SK-N-SH (cell line): ENCODE measurements at regions of chr1 and their contacts with region 1.

Region 1: DNA sequence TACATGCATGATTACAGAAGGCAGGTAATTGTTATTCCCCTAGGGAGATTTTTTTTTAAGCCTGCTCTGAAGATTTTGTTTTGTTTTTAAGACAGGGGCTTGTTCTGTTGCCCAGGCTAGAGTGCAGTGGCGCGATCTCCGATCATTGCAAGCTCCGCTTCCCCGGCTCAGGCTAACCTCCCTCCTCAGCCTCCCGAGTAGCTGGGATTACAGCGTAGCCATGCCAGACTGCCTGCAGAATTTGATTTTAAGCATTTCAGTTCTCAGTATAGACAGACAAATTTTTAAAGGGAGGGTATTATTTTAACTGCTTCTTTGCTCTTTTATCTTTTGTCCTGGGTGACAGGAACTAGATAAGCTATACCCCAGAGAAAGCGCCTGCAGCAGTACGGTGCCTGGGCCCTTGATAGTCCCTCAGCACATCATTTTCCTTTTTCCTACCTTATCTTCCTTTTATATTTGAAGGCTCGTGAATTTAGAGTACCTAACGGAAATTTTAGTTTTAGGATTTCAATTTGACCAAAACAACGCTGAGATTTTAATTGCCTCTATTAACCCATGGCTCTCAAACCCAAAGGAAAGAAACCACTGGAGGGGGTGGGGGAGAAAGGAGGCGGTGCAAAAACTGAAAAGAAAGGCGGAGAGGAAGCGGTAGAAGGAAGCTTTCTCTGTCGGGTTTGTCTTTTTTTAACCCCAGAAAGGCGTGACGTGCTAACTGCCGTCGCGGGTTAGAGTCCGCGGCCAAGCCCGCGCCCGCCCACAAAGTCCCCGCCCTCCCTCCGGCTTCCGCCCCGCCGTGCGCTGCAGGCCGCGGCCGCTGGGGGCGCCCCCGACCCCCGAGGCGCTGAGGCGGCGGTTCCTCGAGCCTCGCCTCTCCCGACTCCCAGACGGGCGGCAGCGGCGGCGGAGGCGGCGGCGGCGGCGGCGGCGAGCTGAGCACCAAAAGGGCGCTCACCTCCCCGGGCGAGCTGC is at the start of gene EEIG2:
- DNase-seq: peak; percentile 95
- H3K4me3 ChIP-seq: peak within 1 kb of the TSS; percentile 77 to 82
- H3K27ac ChIP-seq: peak within 1 kb of the TSS; percentile 55 to 76
- H3K4me1 ChIP-seq: peaks cover 5 to 12% of the 10 kb centered on the region in 2 experiments; a peak in 3 of 4 replicates
- H3K27me3 ChIP-seq: no peaks in the 10 kb centered on the region
- CTCF ChIP-seq: peak; percentile 64
- EP300 ChIP-seq: no peak
- RAD21 ChIP-seq: peak; percentile 46
- polyA plus RNA-seq, gene EEIG2: 2.9 and 3.1 TPM in 2 replicates

Region 2: DNA sequence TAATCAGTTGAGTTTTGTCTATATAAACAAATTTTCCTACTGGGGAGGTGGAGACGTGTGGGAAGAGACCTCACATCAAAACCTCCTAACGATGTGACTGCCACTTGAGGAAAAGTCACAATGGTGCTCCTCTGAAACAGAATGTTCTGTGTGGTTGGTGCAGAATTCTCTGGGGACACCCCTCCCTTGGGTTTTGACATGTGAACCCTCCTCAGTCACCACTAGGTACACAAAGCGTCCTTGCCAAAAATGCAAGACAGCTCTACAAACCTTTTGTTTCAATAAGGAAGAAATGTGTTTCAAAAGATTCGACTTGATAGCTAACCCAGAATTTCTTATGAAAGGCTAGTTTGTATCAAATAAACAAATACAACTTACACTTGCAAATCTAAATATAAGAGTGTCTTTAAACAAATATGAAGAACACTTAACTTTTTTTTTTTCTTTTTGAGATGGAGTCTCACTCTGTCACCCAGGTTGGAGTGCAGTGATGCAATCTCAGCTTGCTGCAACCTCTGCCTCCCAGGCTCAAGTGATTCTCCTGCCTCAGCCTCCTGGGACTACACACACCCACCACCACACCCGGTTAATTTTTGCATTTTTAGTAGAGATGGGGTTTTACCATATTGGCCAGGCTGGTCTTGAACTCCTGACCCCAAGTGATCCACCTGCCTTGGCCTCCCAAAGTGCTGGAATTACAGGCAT is 368.6 kb before region 1 on chr1:
- CTCF ChIA-PET with region 1: no interaction called
- POLR2A ChIA-PET with region 1: no interaction called
- DNase-seq: no peak
- H3K4me3 ChIP-seq: no peak overlapping the region
- H3K27ac ChIP-seq: no peak overlapping the region
- H3K4me1 ChIP-seq: no peaks in the 10 kb centered on the region
- H3K27me3 ChIP-seq: no peaks in the 10 kb centered on the region
- CTCF ChIP-seq: no peak
- EP300 ChIP-seq: no peak
- RAD21 ChIP-seq: no peak

Region 3: GRCh38 chr1:108482708-108483107 is 76.8 kb before region 1 on chr1:
- CTCF ChIA-PET with region 1: no interaction called
- POLR2A ChIA-PET with region 1: no interaction called
- DNase-seq: no peak
- H3K4me3 ChIP-seq: no peak overlapping the region
- H3K27ac ChIP-seq: no peak overlapping the region
- H3K4me1 ChIP-seq: no peaks in the 10 kb centered on the region
- H3K27me3 ChIP-seq: no peaks in the 10 kb centered on the region
- CTCF ChIP-seq: no peak
- EP300 ChIP-seq: no peak
- RAD21 ChIP-seq: no peak

Region 4: DNA sequence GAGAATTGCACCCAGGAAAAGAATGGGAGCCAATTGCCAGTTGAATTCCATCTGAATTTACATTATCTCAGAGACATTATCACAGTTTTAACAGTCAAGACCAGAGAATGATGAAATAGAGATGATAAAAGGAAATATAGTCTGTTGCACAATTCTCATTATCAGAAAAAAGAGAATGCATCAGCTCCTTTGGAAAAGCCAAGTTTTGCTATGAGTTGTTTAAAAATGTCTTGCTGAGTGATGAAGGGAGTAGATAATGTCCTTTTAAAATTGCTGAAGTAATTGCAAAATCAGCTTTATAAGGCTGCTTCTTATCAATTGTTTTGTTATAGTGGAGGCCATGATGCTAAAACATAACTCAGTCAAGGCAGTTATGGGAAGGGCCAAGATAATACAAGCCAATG is 37.5 kb before region 1 on chr1:
- CTCF ChIA-PET with region 1: interaction called, 12 read pairs
- POLR2A ChIA-PET with region 1: no interaction called
- DNase-seq: no peak
- H3K4me3 ChIP-seq: no peak overlapping the region
- H3K27ac ChIP-seq: no peak overlapping the region
- H3K4me1 ChIP-seq: no peaks in the 10 kb centered on the region
- H3K27me3 ChIP-seq: peaks cover 14% of the 10 kb centered on the region; the same call in 1 of the 2 replicates
- CTCF ChIP-seq: no peak
- EP300 ChIP-seq: no peak
- RAD21 ChIP-seq: no peak

Region 5: DNA sequence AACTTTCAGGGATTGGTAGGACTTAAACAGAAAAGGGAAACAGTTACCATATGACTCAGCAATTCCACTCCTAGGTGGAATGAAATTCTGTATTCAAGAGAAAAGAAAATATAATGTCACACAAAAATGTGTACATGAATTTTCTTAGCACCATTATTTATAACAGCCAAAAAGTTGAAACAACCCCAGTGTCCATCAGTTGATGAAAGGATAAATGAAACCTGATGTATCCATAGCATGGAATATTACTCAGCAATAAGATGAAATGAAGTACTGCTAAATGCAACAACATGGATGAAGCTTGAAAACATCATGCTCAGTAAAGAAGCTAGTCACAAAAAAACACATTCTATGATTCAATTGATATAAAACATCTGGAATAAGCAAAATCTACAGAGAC is 15.9 kb after region 1 on chr1:
- CTCF ChIA-PET with region 1: interaction called, 18 read pairs
- POLR2A ChIA-PET with region 1: no interaction called
- DNase-seq: no peak
- H3K4me3 ChIP-seq: no peak overlapping the region
- H3K27ac ChIP-seq: peak overlapping the region; percentile 67 to 70
- H3K4me1 ChIP-seq: peaks cover 5 to 9% of the 10 kb centered on the region in 2 experiments; a peak in 3 of 4 replicates
- H3K27me3 ChIP-seq: no peaks in the 10 kb centered on the region
- CTCF ChIP-seq: no peak
- EP300 ChIP-seq: no peak
- RAD21 ChIP-seq: no peak

Region 6: GRCh38 chr1:108636876-108637275 is 77.4 kb after region 1 on chr1:
- CTCF ChIA-PET with region 1: interaction called, 11 read pairs
- POLR2A ChIA-PET with region 1: interaction called, 3 read pairs
- DNase-seq: no peak
- H3K4me3 ChIP-seq: no peak overlapping the region
- H3K27ac ChIP-seq: no peak overlapping the region
- H3K4me1 ChIP-seq: no peaks in the 10 kb centered on the region
- H3K27me3 ChIP-seq: no peaks in the 10 kb centered on the region
- CTCF ChIP-seq: no peak
- EP300 ChIP-seq: no peak
- RAD21 ChIP-seq: no peak

Region 7: GRCh38 chr1:108653431-108654105 is 94.1 kb after region 1 on chr1:
- CTCF ChIA-PET with region 1: no interaction called
- POLR2A ChIA-PET with region 1: no interaction called
- DNase-seq: no peak
- H3K4me3 ChIP-seq: no peak overlapping the region
- H3K27ac ChIP-seq: no peak overlapping the region
- H3K4me1 ChIP-seq: no peaks in the 10 kb centered on the region
- H3K27me3 ChIP-seq: no peaks in the 10 kb centered on the region; the same call in 1 of the 2 replicates
- CTCF ChIP-seq: no peak
- EP300 ChIP-seq: no peak
- RAD21 ChIP-seq: no peak

Region 8: DNA sequence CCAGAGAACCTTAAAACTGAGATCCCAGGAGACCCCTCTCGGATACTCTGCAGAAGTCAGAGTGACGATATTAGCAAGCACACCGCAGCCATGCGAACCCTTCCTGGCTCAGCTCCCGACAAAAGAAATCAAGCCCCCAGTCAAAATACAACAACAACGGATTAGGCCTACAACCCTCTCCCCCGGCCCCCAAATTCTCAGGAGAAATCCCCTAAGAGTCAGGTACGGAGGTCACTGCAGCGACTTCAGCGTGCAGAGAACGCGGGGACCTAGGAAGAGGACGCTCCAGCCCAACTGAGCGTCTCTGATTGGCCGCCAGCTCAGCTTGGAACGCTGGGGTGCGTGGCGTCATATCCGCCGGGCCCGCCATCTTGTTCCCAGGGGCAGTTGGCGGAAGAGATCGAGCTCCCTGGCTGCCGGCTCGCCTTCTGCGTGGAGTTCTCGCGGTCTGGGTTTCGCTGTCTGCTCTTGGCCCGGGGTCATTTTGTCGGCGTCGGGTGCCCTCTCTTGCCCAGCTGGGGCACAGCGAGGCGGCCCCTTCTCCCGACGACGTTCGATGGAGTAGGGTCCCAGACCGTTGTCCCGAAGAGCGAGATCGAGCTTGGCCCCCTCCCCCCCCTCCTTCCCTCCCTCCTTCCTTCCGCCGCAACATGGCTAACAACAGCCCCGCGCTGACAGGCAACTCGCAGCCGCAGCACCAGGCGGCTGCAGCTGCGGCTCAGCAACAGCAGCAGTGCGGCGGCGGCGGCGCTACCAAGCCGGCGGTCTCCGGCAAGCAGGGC is 132.6 kb after region 1 on chr1 and contains the start of gene PRPF38B:
- CTCF ChIA-PET with region 1: interaction called, 9 read pairs
- POLR2A ChIA-PET with region 1: interaction called, 12 read pairs
- DNase-seq: peak; percentile 93
- H3K4me3 ChIP-seq: peak within 1 kb of the TSS; percentile 97 to 98
- H3K27ac ChIP-seq: peak within 1 kb of the TSS; percentile 96 to 99
- H3K4me1 ChIP-seq: peaks cover 11 to 16% of the 10 kb centered on the region in 2 experiments; a peak in 3 of 4 replicates
- H3K27me3 ChIP-seq: no peaks in the 10 kb centered on the region
- CTCF ChIP-seq: no peak
- EP300 ChIP-seq: no peak
- RAD21 ChIP-seq: no peak; the same call in 1 of the 2 replicates
- polyA plus RNA-seq, gene PRPF38B: 17.5 and 22.3 TPM in 2 replicates

Region 9: DNA sequence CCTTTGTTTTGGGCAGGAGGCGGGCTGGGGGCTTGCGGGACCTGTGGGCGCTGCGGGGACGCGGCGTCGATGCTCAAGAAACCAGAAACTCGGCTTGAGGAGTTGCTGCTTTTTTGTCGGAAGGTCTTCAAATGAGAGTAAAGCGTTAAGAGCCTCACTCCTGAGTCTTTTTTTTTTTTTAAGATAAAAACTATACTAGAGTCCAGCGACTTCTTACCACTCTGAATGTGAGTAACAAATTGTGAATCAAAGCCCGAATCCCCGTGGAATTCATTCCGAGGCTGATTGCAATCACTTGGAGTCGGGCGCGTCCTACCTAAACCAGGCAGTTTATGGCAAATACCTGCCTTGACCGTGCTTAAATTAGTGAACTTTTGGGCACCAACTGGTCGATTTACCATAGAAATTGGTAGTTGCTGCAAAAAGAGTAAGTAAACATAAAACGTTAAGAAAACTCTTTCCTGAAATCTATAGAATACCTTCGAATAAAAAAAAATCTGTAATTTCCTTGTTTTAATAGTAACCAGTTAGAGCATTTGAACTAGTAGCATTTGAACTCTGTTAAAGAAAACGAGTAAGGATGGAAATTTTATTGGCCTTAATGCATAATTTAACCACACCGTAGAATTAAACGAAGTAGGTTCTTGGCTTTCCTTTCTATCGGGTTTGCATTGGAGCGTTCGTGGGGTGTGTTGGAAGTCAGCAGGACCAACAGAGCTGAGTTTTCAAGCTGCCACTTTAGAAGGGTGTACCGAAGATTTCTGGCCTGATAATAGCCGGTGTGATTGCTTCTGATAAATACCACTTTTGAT is 318.1 kb after region 1 on chr1:
- CTCF ChIA-PET with region 1: no interaction called
- POLR2A ChIA-PET with region 1: no interaction called
- DNase-seq: peak; percentile 30
- H3K4me3 ChIP-seq: peak overlapping the region; percentile 88
- H3K27ac ChIP-seq: peak overlapping the region; percentile 47 to 55
- H3K4me1 ChIP-seq: peaks cover 0 to 2% of the 10 kb centered on the region in 2 experiments; a peak in 2 of 4 replicates
- H3K27me3 ChIP-seq: no peaks in the 10 kb centered on the region
- CTCF ChIP-seq: no peak
- EP300 ChIP-seq: no peak
- RAD21 ChIP-seq: no peak